ENCODE measurements at regions of chr14 and their contacts with region 1.

Region 1: DNA sequence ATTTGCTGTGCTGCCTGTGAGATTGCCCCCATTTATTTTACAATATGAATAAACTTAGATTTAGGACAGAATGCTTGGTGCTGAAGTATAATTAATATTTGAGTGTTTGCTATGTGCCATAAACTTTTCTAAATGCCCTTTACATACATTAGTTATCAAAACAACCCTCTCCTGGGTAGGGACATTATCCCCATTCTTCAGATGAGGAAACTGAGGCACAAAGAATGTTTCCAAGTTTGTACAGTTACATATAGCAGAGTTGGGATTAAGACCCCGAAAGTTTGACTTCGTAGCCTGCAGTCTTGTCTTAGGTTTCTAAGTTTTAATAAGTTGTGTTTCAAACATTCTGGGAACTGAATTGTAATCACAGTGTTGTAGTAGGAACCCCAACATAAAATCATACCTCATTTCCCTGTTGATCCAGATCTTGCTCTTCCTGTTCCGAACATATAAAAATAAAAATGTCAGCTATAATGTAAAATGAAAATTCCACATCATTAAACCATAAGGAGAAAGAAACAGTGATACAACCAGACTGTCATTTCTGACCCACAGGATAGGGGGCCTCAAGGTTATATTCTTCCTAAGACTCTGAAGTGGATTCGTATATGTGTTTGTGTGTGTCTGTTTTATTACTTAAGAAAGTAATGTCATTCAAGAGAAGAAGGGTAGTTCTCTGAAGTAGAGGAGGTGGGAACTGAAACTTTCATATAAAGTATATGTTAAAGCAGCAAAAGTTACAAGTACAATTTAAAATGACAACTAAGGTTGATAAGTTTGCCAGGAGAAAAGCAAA is 18.6 kb downstream of the KLHDC2 start:
- DNase-seq: no peak
- H3K4me3 ChIP-seq: no peak overlapping the region
- H3K27ac ChIP-seq: no peak overlapping the region
- H3K4me1 ChIP-seq: no peaks in the 10 kb centered on the region
- H3K27me3 ChIP-seq: no peaks in the 10 kb centered on the region
- CTCF ChIP-seq: no peak
- EP300 ChIP-seq: no peak
- POLR2A ChIP-seq: no peak

Region 2: DNA sequence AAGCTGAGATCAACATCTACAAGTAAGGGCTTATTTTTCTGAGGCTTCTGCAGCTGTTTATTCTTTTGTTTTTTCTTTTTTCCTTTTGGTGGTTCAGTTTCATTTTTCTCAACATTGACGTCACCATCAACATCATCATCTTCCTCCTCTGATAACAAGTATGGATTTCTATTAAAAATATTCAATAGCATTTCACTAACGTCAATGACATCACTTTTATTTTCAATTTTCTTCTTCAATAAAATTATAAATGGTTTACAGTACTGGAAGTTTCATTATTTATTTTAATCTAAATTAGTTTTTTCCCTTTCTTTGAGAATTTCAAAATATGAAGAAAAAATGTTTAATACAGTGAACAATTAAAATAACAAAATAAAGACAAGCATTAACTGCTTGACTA is 42.1 kb after region 1 on chr14:
- intact Hi-C with region 1: loop called in 1 of 4 experiments (anchors 10 kb)
- DNase-seq: no peak
- H3K4me3 ChIP-seq: no peak overlapping the region
- H3K27ac ChIP-seq: no peak overlapping the region
- H3K4me1 ChIP-seq: no peaks in the 10 kb centered on the region
- H3K27me3 ChIP-seq: no peaks in the 10 kb centered on the region
- CTCF ChIP-seq: no peak
- EP300 ChIP-seq: no peak
- POLR2A ChIP-seq: no peak

Region 3: DNA sequence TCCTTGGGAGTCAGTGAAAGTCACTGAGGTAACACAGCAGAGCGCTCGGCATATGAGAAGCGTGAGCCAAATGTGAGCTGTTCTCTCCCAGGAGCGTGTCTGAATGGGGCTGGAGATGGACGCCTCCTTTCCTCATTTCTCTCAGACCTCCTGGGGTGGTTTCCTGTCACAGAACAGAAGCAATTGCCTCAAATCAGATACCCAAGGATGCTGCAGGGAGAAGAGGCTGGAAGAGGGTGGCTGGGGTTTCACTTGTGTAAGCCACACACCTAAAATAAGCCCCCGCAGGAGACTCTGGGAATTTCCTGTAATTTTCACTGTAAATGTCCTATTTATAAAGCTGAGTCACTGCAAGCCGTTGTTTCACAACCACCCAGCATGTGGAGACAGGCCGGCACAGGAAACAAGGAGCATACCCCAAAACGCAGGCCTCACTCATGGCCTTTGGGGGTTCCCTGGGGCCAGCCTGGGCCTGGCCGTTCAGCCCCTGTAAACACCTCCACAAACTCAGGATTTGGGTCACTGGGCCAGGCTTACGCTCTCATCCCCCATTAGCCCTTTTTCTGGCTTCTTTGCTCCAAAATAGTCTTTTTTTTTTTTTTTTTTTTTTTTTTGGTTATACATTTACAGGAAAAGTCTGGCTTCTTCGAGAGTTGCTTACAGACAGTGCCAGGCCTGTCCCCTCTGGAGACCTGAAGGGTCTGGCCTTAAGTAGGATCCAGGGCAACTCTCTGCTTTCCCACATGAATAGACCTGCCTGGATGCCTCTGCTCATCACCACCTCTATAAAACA is 274.6 kb after region 1 on chr14:
- intact Hi-C with region 1: no loop called
- DNase-seq: peak; percentile 33 to 67 (median 44)
- H3K4me3 ChIP-seq: no peak overlapping the region
- H3K27ac ChIP-seq: no peak overlapping the region
- H3K4me1 ChIP-seq: peaks cover 3% of the 10 kb centered on the region
- H3K27me3 ChIP-seq: no peaks in the 10 kb centered on the region
- CTCF ChIP-seq: no peak
- EP300 ChIP-seq: no peak
- POLR2A ChIP-seq: no peak

Measured in ovary (tissue), 10 donors.